Uterus (tissue), 4 donors: ENCODE measurements at regions of chr7 and their contacts with region 1.

Region 1: GRCh38 chr7:55365675-55366460 is 731 bp downstream of the LANCL2 start:
- DNase-seq: peak; percentile 93 to 94
- H3K4me3 ChIP-seq: peak overlapping the region; percentile 88 to 99
- H3K27ac ChIP-seq: peak overlapping the region; percentile 97 to 99
- H3K4me1 ChIP-seq: peaks cover 0 to 15% of the 10 kb centered on the region in 2 donors
- H3K27me3 ChIP-seq: no peaks in the 10 kb centered on the region
- CTCF ChIP-seq: peak in 3 of 4 experiments; percentile 19 to 50 (median 45)
- POLR2A ChIP-seq: peak; percentile 53 to 83

Region 2: DNA sequence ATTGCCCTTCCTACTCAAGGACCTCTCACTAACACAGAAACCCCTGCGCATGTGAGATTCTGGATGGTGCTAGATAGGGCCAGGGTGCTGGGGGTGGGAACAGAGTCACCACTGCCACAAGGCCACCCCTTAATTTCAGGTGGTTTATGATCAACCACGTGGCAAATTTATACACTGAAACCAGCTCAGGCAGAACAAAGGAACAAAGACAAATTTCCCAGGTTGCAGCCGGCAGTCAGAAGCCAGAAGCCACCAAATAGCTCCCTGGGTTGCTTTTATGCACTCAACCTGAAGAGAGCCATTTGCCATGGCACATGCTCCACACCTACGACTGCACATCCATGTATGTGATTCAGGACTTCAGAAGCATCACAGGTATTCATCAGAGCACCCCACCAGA is 203.9 kb after region 1 on chr7:
- intact Hi-C with region 1: loop called (anchors 10 kb)
- DNase-seq: no peak
- H3K4me3 ChIP-seq: no peak overlapping the region
- H3K27ac ChIP-seq: no peak overlapping the region
- H3K4me1 ChIP-seq: peaks cover 0 to 6% of the 10 kb centered on the region in 2 donors
- H3K27me3 ChIP-seq: no peaks in the 10 kb centered on the region
- CTCF ChIP-seq: no peak
- POLR2A ChIP-seq: no peak